ENCODE measurements at regions of chr2 and their contacts with region 1.

Region 1: DNA sequence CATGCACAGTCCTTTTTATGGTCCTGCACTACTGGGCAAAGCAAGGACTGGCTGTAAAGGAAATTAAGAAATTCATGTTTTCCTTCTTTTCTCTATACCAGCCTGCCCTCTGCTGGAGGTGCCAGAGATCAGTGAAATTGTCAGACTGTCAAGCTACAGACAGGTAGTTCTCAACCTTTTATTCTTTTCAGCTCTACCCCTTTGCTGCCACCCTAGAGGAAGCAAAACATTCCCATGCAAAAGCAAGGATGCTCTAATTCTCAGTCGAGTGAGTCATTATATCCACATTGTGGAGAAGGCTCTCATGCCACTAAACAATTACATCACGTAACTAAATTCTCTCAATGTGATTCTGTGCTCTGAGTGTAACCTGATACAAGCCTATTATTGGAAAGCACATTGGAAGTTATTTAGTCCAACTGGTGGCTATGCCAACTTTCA is 25.0 kb upstream of the RAPGEF4 start:
- H3K4me3 ChIP-seq: no peak overlapping the region
- H3K27ac ChIP-seq: no peak overlapping the region
- H3K4me1 ChIP-seq: 0 out of 2 replicates have a peak, but pooled peaks cover 3% of the 10 kb centered on the region
- CTCF ChIP-seq: peak; percentile 68

Region 2: GRCh38 chr2:172596776-172597175 is 113.8 kb before region 1 on chr2:
- CTCF ChIA-PET with region 1: interaction called, 42 read pairs
- POLR2A ChIA-PET with region 1: no interaction called
- H3K4me3 ChIP-seq: no peak overlapping the region
- H3K27ac ChIP-seq: no peak overlapping the region
- H3K4me1 ChIP-seq: no peaks in the 10 kb centered on the region
- CTCF ChIP-seq: no peak

Region 3: DNA sequence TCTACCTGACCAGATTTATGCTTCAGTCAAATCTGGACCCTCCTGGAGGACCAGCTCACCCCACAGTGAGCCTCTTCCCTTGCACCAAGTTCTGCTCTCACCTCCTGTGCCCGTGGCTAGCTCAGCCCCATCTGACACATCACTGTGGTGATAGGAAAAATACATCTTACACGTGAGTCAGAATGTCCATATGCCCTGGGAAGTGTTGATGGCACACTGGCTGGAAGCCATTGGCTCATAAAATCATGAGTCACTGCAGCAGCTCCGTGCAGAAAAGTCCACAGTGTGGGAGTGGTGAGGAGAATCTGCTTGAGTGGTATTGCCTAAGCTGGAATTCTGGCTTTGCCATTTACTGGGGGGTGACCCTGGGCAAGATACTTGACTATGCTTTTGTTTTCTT is 17.6 kb before region 1 on chr2:
- CTCF ChIA-PET with region 1: no interaction called
- POLR2A ChIA-PET with region 1: no interaction called
- H3K4me3 ChIP-seq: no peak overlapping the region
- H3K27ac ChIP-seq: no peak overlapping the region
- H3K4me1 ChIP-seq: peaks cover 8% of the 10 kb centered on the region
- CTCF ChIP-seq: no peak

Measured in HEK293 (cell line).